ENCODE measurements at regions of chr15 and their contacts with region 1.

Region 1: DNA sequence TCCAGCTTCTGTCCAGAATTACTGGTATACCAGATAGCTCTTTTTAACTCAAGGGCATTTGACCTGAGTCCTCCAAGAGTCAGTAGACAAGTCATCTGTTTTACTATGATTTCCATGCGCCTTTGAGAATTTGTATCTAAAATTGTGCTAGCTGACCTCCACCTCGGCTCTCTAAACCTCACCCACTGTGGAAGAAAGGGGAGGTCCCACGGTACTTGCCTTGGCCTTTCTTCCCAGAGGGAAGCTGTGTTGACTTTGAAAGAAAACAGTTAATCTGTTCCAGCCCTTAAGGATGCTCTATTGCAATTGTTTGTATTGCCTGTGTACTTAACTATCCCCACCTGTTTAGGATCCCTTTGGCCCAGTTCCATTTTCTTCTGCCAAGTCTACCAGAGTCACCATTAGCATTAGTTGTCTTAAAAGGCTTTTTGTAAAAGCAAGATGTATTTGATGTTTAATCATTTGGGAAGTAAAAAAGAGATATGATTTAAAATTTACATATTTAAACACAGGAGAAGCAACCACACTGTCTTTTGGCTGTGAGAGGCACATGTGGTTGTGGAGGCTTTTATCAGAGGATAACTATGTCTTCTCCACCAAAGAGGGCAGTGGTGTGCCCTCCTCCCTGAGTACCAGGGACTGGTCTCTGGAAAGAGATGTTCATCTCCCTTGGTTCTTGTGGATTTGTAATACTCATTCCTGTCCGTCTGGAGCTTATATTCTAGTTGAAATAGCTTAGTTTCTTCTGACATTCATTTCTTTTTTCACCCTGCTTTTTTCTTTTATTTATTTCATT is 88.8 kb downstream of the CRTC3 start:
- DNase-seq: no peak
- H3K4me3 Mint-ChIP-seq: no peak overlapping the region
- H3K27ac Mint-ChIP-seq: peak overlapping the region; percentile 60
- H3K4me1 Mint-ChIP-seq: peaks cover 50% of the 10 kb centered on the region
- H3K27me3 Mint-ChIP-seq: no peaks in the 10 kb centered on the region

Region 2: DNA sequence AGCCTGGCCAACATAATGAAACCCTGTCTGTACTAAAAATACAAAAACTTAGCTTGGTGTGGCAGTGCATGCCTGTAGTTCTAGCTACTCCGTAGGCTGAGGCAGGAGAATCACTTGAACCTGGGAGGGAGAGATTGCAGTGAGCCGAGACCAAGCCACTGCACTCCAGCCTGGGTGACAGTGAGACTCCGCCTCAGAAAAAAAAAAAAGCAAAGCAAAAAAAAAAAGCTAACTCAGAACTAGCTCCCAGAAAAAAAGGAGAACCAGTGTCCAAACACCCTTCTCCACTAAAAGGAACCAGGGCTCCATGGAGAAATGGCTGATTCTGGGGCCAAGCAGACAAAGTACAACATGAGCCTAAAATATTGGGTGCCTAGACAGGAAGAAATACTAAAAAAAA is 105.5 kb before region 1 on chr15:
- intact Hi-C with region 1: no loop called
- DNase-seq: no peak
- H3K4me3 Mint-ChIP-seq: no peak overlapping the region
- H3K27ac Mint-ChIP-seq: no peak overlapping the region
- H3K4me1 Mint-ChIP-seq: peaks cover 12% of the 10 kb centered on the region
- H3K27me3 Mint-ChIP-seq: peaks cover 1% of the 10 kb centered on the region

Region 3: DNA sequence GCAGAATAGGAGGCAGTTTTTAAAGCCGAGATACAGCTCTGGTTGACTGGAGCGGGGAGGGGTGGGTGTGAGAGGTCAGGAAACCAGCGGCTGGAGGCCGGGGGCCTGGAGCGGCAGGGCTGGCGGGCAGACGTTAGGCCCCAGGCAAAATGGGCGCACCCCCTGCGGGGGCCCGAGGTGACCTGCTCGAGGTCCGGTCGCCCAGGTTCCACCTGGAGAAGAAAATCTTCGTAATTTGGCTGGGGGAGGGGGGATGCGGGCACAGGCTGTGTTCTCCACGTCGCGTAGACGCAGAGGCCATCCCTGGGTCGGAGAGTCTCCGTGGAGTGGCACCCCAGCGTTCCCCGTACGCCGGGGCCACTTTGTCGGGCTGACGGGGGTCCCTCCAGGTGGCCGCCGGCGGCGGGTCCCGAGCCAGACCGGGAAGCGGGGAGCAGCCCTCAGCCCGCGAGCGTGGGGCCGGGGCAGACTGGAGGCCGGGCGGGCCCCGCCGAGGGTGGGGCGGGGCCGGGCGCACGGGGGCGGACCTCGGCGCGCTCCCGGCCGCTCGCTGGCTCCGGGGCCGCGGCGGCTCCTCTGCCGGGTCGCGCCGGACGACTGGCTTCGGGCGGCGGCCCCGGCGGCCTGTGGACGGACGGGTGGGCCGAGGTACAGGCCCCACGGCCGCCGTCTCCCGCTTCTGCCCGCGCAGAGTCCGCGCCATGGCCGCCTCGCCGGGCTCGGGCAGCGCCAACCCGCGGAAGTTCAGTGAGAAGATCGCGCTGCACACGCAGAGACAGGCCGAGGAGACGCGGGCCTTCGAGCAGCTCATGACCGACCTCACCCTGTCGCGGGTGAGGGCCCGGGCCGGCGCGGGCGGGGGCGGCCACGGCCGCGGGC is 88.9 kb before region 1 on chr15 and contains the start of gene CRTC3:
- intact Hi-C with region 1: loop called (anchors 5 kb)
- DNase-seq: peak; percentile 55
- H3K4me3 Mint-ChIP-seq: peak within 1 kb of the TSS; percentile 96
- H3K27ac Mint-ChIP-seq: peak within 1 kb of the TSS; percentile 92
- H3K4me1 Mint-ChIP-seq: peaks cover 40% of the 10 kb centered on the region
- H3K27me3 Mint-ChIP-seq: no peaks in the 10 kb centered on the region
- total RNA-seq, gene CRTC3: 59.7 and 61.8 TPM in 2 replicates